ENCODE measurements at regions of chr5 and their contacts with region 1.

Region 1: GRCh38 chr5:126354012-126354857 is 69.0 kb upstream of the GRAMD2B start:
- DNase-seq: no peak
- H3K4me3 ChIP-seq: peak overlapping the region in 1 of 4 donors; percentile 26
- H3K27ac ChIP-seq: peak overlapping the region; percentile 16 to 64 (median 42)
- H3K4me1 ChIP-seq: peaks cover 0 to 15% (median 9%) of the 10 kb centered on the region in 4 donors
- H3K27me3 ChIP-seq: no peaks in the 10 kb centered on the region
- CTCF ChIP-seq: peak; percentile 21 to 58 (median 46)
- EP300 ChIP-seq: no peak
- POLR2A ChIP-seq: no peak

Region 2: GRCh38 chr5:126490167-126490940 is 136.1 kb after region 1 on chr5:
- intact Hi-C with region 1: loop called (anchors 5 kb)
- DNase-seq: peak; percentile 75
- H3K4me3 ChIP-seq: no peak overlapping the region
- H3K27ac ChIP-seq: peak overlapping the region; percentile 33 to 69 (median 51)
- H3K4me1 ChIP-seq: peaks cover 0 to 4% (median 0%) of the 10 kb centered on the region in 4 donors
- H3K27me3 ChIP-seq: no peaks in the 10 kb centered on the region
- CTCF ChIP-seq: no peak
- EP300 ChIP-seq: no peak
- POLR2A ChIP-seq: no peak

Region 3: DNA sequence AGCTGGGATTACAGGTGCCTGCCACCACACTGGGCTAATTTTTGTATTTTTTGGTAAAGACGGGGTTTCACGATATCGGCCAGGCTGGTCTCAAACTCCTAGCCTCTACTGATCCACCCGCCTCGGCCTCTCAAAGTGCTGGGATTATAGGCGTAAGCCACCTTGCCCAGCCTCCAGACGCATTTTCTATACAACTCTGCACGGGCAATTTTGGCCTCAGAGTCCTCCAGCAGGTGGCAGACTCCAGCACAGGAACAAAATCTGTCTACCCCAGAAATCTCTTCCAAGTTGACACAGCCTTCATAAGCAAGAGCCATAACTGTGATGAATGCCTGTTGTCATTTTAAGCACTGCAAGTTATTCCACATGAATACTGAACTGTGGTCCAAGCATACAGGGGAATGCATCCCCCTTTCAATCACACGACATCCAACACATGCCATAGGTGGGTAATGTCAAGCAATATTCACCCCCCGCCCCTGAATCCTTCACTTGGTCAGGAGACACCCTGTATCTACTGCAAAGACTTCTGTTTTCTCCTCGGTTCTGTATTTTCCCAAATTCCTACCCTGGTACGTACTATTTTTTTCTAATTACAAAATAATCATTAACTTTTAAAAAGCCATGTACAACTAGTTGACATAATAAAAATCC is 190.0 kb after region 1 on chr5:
- intact Hi-C with region 1: loop called (anchors 1 kb)
- DNase-seq: no peak
- H3K4me3 ChIP-seq: no peak overlapping the region
- H3K27ac ChIP-seq: no peak overlapping the region
- H3K4me1 ChIP-seq: no peaks in the 10 kb centered on the region
- H3K27me3 ChIP-seq: no peaks in the 10 kb centered on the region
- CTCF ChIP-seq: peak in 2 of 4 experiments; percentile 24 to 26
- EP300 ChIP-seq: no peak
- POLR2A ChIP-seq: no peak

Measured in sigmoid colon (tissue), 7 donors.